GM12878 (cell line): ENCODE measurements at regions of chr3 and their contacts with region 1.

Region 1: DNA sequence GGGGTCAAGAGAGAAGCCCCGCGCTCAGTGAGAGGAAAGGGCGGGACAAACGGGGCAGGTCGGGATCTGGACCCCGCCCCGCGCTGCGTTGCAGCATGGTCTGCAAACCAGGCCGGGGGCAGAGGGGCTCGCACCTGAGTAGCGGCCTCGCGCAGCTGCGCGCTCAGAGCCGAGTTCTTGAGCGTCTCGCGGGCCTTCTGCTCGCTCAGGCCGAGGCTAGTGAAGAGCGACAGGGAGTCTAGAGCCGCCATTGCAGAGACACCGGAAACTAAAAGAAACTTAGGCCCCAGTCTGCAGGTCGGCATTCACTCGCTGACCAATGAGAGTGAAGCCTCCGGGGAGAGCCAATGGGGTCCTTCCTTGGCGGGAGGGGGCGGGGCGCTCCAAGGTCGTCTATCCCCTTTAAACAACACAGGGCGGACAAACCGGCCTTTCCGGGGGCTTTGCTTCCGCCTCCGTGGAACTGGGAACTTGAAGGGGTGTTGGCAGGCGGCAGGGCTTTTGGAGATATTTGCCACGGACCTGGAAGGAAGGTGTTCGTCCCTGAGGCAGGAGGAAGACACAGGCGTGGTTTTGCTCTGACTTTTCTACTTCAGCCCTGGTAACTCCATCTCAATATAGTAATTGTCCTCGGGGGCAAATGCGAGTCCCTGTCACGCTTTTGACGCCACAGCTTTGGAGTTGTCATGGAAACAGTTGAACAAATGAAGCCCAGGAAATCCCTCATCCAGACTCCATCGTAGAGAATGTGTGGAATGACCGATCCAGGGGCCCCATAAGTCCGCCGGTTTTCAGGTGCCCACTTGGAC is at the start of gene QARS1:
- DNase-seq: peak; percentile 69
- ATAC-seq: peak; percentile 100
- H3K4me3 ChIP-seq: peak within 1 kb of the TSS; percentile 100
- H3K27ac ChIP-seq: peak within 1 kb of the TSS; percentile 92
- H3K4me1 ChIP-seq: peaks cover 11% of the 10 kb centered on the region
- H3K27me3 ChIP-seq: no peaks in the 10 kb centered on the region
- CTCF ChIP-seq: no peak
- EP300 ChIP-seq: no peak
- POLR2A ChIP-seq: peak; percentile 91
- RAD21 ChIP-seq: no peak
- polyA plus RNA-seq, gene QARS1: 229 to 328 TPM

Region 2: DNA sequence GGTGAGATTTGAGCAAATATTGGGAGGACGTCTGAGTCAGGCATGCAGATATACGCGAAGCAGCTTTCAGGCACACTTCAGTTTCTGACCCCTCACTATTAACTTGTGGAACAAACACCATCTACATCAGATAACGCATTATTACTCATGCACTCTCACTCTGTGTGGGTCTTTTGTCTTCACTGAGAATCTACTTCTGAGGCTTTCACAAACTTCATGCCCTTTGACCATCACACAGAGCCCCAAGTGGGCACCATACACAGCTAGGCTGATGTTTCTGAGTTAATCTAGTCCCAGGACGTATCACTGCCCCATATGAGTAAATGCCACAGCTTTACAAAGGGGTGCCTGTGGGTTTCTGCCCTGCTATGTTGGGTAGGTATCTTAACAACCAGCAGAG is 348.0 kb before region 1 on chr3:
- CTCF ChIA-PET with region 1: no interaction called
- POLR2A ChIA-PET with region 1: no interaction called
- RAD21 ChIA-PET with region 1: no interaction called
- SMC1A ChIA-PET with region 1: no interaction called
- in situ Hi-C with region 1: no loop called
- intact Hi-C with region 1: no loop called
- DNase-seq: no peak
- ATAC-seq: no peak
- H3K4me3 ChIP-seq: no peak overlapping the region
- H3K27ac ChIP-seq: no peak overlapping the region
- H3K4me1 ChIP-seq: no peaks in the 10 kb centered on the region
- H3K27me3 ChIP-seq: no peaks in the 10 kb centered on the region
- CTCF ChIP-seq: no peak
- EP300 ChIP-seq: no peak
- POLR2A ChIP-seq: no peak
- RAD21 ChIP-seq: no peak

Region 3: DNA sequence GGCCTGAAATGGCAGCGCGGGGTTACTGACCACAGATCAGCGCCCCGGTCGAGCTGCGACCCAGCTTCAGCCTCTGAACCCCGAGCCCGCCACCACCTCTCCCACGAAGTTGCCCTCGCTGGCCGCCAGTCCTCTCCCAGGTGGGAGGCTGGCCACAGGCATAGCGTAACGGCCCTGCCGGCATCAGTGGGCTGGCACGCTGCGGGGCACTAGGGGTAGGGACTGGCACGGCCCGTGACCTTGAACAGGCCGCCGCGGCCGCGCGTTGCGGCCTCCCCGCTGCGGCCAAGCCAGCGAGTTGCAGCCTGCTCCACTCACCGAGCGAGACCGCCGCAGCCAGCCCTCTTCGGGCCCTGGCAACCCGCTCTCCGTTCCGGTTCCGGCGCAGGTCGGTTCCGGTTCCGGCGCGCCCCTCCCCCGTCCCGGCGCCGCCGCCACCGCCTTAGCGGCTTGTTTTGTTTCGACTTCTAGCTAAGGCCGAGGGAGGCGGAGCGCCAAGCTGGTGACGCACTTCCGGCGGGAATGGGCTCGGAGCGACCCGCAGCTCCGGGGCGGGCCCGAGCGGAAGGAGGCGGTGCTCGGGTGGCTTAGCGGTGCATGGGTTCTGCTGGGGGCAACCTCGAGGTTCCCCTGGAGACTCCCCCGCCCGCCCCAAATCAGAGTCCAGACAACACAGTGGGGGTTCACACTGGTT is 15.9 kb after region 1 on chr3 and contains the start of gene USP19:
- CTCF ChIA-PET with region 1: interaction called, 3 read pairs
- POLR2A ChIA-PET with region 1: interaction called, 10 read pairs
- RAD21 ChIA-PET with region 1: interaction called, 4 read pairs
- SMC1A ChIA-PET with region 1: interaction called, 3 read pairs
- in situ Hi-C with region 1: no loop called
- intact Hi-C with region 1: no loop called
- DNase-seq: peak; percentile 71
- ATAC-seq: peak; percentile 94
- H3K4me3 ChIP-seq: peak within 1 kb of the TSS; percentile 100
- H3K27ac ChIP-seq: peak within 1 kb of the TSS; percentile 79
- H3K4me1 ChIP-seq: peaks cover 10% of the 10 kb centered on the region
- H3K27me3 ChIP-seq: no peaks in the 10 kb centered on the region
- CTCF ChIP-seq: no peak
- EP300 ChIP-seq: no peak
- POLR2A ChIP-seq: peak; percentile 97
- RAD21 ChIP-seq: no peak
- polyA plus RNA-seq, gene USP19: 0.24 to 0.68 TPM